Kidney (tissue), 22 donors: ENCODE measurements at regions of chr18 and their contacts with region 1.

Region 1: GRCh38 chr18:48834413-48835031 is 116.2 kb downstream of the SMAD7 start:
- DNase-seq: peak in 3 of 5 donors; percentile 42 to 94 (median 74)
- H3K4me3 ChIP-seq: no peak overlapping the region
- H3K27ac ChIP-seq: no peak overlapping the region
- H3K4me1 ChIP-seq: peaks cover 5 to 30% (median 7%) of the 10 kb centered on the region in 3 donors
- H3K27me3 ChIP-seq: no peaks in the 10 kb centered on the region
- CTCF ChIP-seq: no peak

Region 2: DNA sequence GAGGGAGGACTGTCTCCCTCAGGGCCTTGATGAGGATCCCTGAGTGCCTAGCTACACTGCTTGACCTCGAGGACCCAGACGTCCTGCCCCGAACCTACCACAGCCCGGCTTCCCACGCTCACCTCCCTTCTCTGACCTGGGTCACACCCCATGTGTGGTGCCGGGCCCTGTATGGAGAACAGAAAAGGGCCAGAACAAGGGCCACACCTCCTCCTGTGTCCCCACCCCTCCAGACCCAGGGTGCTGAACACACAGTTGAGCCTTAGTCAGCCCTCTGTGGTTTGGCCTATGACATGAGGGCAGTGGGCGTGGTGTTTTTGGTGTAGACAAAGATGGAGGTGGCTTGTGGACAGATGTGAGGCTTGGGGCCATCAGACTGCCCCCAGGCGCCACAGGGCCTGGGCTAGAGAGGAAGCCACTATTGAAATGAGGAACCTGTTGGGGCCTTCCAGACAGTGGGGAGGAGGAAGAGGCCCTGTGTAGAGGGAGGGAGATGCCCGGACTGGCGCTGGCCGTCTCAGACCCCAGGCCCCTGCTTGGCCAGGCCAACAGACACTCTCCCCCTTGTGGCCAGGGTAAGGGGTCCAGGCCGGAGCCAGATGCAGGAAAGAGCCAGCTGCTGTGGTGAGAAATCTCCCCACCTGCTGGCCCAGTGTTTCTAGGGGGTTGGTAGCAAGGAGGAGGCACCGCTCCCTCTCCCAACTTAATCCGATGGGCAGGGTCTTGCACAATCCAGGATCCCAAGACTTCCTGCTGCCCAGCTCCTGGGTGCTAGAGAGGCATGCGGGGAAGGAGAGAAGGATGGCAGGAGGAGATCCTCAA is 62.4 kb after region 1 on chr18:
- intact Hi-C with region 1: loop called (anchors 10 kb)
- DNase-seq: peak in 2 of 5 donors; percentile 59 to 78
- H3K4me3 ChIP-seq: no peak overlapping the region
- H3K27ac ChIP-seq: no peak overlapping the region
- H3K4me1 ChIP-seq: peaks cover 0 to 6% (median 3%) of the 10 kb centered on the region in 3 donors
- H3K27me3 ChIP-seq: no peaks in the 10 kb centered on the region
- CTCF ChIP-seq: no peak